ENCODE measurements at regions of chr22 and their contacts with region 1.

Region 1: GRCh38 chr22:18077639-18078328 is at the start of gene PEX26:
- DNase-seq: peak; percentile 94
- H3K4me3 ChIP-seq: peak within 1 kb of the TSS; percentile 57 to 97 (median 81)
- H3K27ac ChIP-seq: peak within 1 kb of the TSS; percentile 80
- H3K4me1 ChIP-seq: peaks cover 25% of the 10 kb centered on the region
- H3K27me3 ChIP-seq: no peaks in the 10 kb centered on the region
- CTCF ChIP-seq: peak in 1 of 2 donors; percentile 1
- total RNA-seq, gene PEX26: 26.5 to 35.1 TPM

Region 2: DNA sequence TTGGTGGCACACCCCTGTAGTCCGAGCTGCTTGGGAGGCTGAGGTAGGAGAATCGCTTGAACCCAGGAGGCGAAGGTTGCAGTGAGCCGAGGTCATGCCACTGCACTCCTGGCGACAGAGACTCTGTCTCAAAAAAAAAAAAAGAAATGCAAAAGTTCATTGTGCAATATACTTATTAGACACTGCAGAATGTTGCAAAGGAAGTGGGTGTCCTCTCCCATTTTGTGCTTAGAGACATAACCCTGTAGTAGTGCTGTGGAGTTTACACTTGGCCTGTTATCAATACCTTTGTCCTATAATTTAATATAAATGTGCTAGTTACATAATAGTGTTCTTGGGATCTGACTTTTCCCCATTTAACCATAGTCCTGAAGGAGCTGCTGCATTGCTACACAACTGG is 429.8 kb before region 1 on chr22:
- CTCF ChIA-PET with region 1: no interaction called
- dilution Hi-C with region 1: no loop called
- in situ Hi-C with region 1: no loop called
- intact Hi-C with region 1: no loop called
- DNase-seq: no peak
- H3K4me3 ChIP-seq: no peak overlapping the region
- H3K27ac ChIP-seq: no peak overlapping the region
- H3K4me1 ChIP-seq: no peaks in the 10 kb centered on the region
- H3K27me3 ChIP-seq: no peaks in the 10 kb centered on the region
- CTCF ChIP-seq: no peak

Region 3: DNA sequence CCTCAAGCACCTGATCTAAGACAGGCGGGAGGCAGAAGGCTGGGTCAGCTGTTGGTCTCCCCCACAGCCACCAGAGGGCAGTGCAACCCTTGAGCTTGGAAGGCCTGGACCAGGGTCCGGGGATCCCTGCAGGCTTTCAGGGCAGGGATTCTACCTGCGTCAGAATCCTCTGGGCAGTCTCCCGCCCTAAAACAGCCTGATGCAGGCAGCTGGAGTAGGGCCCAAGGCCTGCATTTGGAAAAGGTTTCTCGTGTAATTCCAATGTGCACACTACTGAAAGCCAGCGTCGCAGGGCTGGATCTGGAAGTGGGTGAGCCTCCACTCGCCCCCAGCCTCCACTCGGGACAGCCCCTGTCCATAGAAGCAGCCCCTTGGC is 335.3 kb before region 1 on chr22:
- CTCF ChIA-PET with region 1: no interaction called
- dilution Hi-C with region 1: no loop called
- in situ Hi-C with region 1: no loop called
- intact Hi-C with region 1: loop called (anchors 10 kb)
- DNase-seq: peak; percentile 51
- H3K4me3 ChIP-seq: no peak overlapping the region
- H3K27ac ChIP-seq: no peak overlapping the region
- H3K4me1 ChIP-seq: peaks cover 12% of the 10 kb centered on the region
- H3K27me3 ChIP-seq: no peaks in the 10 kb centered on the region
- CTCF ChIP-seq: peak; percentile 81 to 89

Region 4: GRCh38 chr22:17903564-17904295 is 174.1 kb before region 1 on chr22:
- CTCF ChIA-PET with region 1: no interaction called
- dilution Hi-C with region 1: no loop called
- in situ Hi-C with region 1: loop called in 1 of 2 experiments (anchors 10 kb)
- intact Hi-C with region 1: no loop called
- DNase-seq: no peak
- H3K4me3 ChIP-seq: no peak overlapping the region
- H3K27ac ChIP-seq: no peak overlapping the region
- H3K4me1 ChIP-seq: no peaks in the 10 kb centered on the region
- H3K27me3 ChIP-seq: no peaks in the 10 kb centered on the region
- CTCF ChIP-seq: no peak

Region 5: DNA sequence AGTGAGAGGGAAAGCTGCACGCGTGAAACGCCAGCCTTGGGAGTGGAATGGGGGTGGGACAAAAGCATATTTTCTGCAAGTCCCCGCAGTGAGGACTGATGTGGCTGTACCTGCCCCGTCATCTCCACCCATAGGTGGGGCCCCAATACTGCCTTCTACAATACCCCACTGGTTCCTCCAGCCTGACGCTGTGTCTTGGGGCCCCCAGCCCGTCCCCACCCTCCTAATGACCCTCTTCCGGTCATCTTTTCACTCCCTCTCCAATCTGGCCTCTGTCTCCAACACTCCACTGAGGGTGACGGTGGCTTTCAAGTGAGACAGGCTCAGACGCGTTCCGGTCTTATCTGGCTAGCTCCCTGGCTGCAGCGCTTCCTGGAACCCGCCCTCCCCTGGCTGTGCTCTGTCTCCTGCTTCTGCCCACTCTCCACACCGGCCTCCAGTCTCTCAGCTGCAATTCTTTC is 157.6 kb before region 1 on chr22:
- CTCF ChIA-PET with region 1: no interaction called
- dilution Hi-C with region 1: no loop called
- in situ Hi-C with region 1: loop called in 1 of 2 experiments (anchors 5 kb)
- intact Hi-C with region 1: no loop called
- DNase-seq: peak; percentile 72
- H3K4me3 ChIP-seq: no peak overlapping the region
- H3K27ac ChIP-seq: no peak overlapping the region
- H3K4me1 ChIP-seq: peaks cover 77% of the 10 kb centered on the region
- H3K27me3 ChIP-seq: no peaks in the 10 kb centered on the region
- CTCF ChIP-seq: peak in 1 of 2 donors; percentile 22

Region 6: DNA sequence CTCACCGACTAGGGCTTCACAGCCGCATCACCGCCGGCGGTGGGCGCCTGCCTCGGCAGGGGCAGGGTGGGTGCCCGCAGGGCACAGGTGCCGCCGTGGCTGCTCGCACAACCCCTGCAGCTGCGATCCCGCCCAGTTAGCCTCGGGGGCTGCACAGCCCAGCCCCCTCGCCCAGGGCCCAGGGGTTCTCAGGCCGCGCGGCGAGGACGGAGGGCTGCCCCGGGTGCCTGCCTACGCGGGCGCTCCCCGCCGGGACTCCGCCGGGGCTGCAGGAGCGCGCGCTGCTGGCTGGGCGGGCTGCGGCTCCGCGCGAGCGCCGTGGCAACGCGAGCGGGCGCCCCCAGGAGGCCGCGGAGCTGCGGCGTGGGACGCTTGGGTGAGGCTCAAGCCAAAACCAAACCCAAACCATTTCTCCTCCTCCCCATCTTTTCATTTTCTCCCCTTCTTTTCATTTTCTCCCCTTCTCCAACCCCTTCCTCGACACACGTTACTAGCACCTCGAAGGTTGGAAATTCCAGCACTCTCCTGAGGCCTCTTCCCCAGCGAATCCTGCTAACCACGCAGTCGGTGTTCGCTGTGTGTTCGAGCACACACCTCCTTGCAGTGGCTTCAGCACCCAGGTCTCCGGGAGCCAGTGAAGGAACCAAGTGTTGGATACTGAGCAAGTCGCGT is 53.4 kb before region 1 on chr22 and contains the start of gene MICAL3:
- CTCF ChIA-PET with region 1: interaction called, 4 read pairs
- dilution Hi-C with region 1: no loop called
- in situ Hi-C with region 1: no loop called
- intact Hi-C with region 1: loop called (anchors 1 kb)
- DNase-seq: peak; percentile 68
- H3K4me3 ChIP-seq: peak within 1 kb of the TSS; percentile 67 to 74 (median 70)
- H3K27ac ChIP-seq: peak within 1 kb of the TSS; percentile 80
- H3K4me1 ChIP-seq: peaks cover 41% of the 10 kb centered on the region
- H3K27me3 ChIP-seq: no peaks in the 10 kb centered on the region
- CTCF ChIP-seq: peak; percentile 45 to 62
- total RNA-seq, gene MICAL3: 67.2 to 102 TPM

Region 7: DNA sequence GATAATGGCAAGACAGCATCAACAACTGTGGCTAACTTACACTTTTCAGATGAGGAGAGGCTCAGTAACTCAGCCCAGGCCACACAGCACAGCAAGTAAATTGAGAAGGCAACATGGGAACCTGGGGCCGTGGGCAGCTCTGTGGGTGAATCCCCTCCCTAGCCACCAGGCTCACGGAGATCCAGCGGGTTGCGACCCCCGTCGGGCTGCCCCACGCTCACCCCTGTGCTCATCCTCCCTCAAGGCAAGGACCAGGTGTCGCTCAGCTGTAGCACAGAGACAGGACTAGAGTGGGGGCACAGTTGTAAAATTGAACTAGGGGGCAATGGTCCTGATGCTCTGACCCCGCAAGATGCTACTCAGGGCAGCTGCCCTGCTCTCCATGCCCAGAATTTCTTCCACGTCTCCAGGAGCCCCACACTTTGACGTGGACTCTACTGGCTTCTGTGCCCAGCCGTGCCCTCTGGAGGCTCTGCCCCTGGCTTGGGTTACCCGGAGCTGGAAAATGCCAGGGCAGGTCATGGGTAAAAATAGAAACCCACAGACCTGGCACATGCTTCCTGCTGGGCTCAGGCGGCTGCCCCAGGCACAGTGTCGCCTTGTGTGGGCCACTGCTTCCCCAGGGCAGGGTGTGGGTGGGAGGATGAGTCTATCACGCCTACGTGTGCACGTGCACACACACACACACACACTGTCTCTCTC is 41.8 kb after region 1 on chr22:
- CTCF ChIA-PET with region 1: no interaction called
- dilution Hi-C with region 1: no loop called
- in situ Hi-C with region 1: no loop called
- intact Hi-C with region 1: no loop called
- DNase-seq: no peak
- H3K4me3 ChIP-seq: no peak overlapping the region
- H3K27ac ChIP-seq: no peak overlapping the region
- H3K4me1 ChIP-seq: peaks cover 7% of the 10 kb centered on the region
- H3K27me3 ChIP-seq: no peaks in the 10 kb centered on the region
- CTCF ChIP-seq: no peak

Measured in mammary epithelial cell (primary cell).